Common myeloid progenitor, CD34-positive (primary cell): ENCODE measurements at regions of chr1 and their contacts with region 1.

Region 1: DNA sequence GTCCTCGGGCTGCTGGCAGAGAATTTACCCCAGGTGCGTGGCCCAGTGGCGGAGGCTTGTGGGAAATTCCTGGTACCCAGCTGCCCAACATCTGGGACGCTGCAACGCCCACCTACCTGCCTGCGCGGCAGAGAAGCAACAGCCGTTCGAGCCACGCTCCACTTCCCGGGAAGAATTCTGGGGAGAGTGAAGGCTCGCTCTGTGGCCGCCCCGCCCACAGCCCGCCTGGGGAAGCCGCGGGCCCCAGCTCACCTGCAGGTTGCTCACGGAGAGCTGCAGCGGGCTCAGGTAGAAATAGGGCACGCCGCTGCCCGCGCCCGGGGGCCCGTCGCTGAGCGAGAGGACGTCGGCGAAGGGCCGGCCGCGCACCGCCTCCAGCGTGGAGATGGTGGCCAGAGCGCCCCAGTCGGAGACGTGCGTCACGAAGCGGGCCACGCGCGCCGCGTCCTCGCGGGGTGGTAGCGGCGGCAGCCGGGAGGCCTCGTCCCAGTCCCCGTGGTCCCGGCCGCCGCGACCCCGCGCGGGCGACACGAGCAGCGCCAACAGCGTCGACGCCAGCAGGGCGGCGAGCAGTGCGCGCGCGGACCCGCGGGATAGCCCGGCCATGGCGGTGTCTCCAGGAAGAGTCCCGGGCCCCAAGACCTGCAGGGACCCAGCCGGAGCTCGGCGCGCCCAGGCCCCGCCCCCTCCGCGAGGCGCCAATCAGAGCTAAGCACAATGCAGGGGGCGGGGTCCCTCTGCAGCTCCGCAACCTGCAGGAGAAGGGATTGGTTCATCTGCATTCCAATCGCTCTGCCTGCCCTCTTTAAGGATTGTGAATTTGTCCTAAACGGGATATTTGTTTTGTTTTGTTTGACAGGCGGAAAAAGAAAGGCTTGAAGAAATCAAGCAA is at the start of gene CREG1:
- DNase-seq: peak; percentile 93 to 96 (median 96)
- H3K4me3 ChIP-seq: peak within 1 kb of the TSS; percentile 76 to 90 (median 84)
- H3K27ac ChIP-seq: peak within 1 kb of the TSS; percentile 40 to 96
- H3K4me1 ChIP-seq: peaks cover 41 to 63% (median 55%) of the 10 kb centered on the region in 4 experiments
- H3K27me3 ChIP-seq: no peaks in the 10 kb centered on the region

Region 2: GRCh38 chr1:167420510-167420909 is 132.9 kb before region 1 on chr1:
- CTCF ChIA-PET with region 1: no interaction called
- POLR2A ChIA-PET with region 1: no interaction called
- DNase-seq: peak in 2 of 3 donors; percentile 19 to 29
- H3K4me3 ChIP-seq: no peak overlapping the region
- H3K27ac ChIP-seq: no peak overlapping the region
- H3K4me1 ChIP-seq: peaks cover 0 to 4% (median 1%) of the 10 kb centered on the region in 4 experiments
- H3K27me3 ChIP-seq: no peaks in the 10 kb centered on the region

Region 3: DNA sequence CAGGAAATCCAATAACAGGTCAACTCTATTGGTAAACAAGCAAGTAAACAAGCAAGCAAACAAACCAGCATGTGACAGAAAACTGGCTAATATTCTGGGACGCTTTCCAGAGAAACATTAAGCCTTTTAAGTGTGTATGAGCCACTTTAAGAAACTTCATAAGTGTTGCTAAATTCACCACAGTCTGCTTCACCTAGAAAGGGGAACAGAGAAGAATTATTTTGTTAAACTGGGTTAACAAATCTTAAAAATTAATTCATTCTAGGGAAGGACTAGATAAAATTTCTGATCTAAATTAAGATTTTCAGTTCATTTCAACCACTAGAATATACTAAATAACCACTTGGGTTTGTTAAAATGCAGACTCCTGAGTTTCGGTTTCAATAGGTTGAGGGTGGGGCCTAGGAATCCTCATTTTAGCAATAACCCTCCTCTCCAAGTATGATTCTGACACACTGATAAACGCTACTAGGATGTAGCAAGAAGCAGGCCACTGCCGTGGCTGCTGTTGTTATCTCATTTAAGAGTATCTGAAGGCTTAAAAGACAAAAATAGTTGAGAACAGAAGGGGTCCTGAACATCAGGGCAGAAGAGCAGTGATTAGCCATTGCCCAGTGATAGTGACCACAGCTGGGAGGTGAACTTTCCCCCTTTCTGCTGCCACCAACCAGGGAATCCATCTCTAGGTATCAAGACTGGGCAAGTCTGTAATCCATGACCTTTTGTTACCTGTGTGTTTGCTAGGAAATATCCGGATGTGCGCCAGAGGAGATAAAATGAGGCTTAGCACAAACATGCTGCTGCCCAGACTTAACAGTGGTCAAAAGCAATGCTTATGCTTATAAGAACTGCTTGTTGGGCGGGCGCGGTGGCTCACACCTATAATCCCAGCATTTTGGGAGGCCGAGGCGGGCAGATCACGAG is 11.0 kb before region 1 on chr1:
- CTCF ChIA-PET with region 1: interaction called, 20 read pairs
- POLR2A ChIA-PET with region 1: interaction called, 3 read pairs
- DNase-seq: no peak
- H3K4me3 ChIP-seq: no peak overlapping the region
- H3K27ac ChIP-seq: no peak overlapping the region
- H3K4me1 ChIP-seq: peaks cover 0 to 18% (median 8%) of the 10 kb centered on the region in 4 experiments
- H3K27me3 ChIP-seq: no peaks in the 10 kb centered on the region

Region 4: GRCh38 chr1:167563579-167564246 is 10.3 kb after region 1 on chr1:
- CTCF ChIA-PET with region 1: interaction called, 13 read pairs
- POLR2A ChIA-PET with region 1: no interaction called
- DNase-seq: no peak
- H3K4me3 ChIP-seq: no peak overlapping the region
- H3K27ac ChIP-seq: no peak overlapping the region
- H3K4me1 ChIP-seq: peaks cover 0 to 16% (median 3%) of the 10 kb centered on the region in 4 experiments
- H3K27me3 ChIP-seq: no peaks in the 10 kb centered on the region

Region 5: DNA sequence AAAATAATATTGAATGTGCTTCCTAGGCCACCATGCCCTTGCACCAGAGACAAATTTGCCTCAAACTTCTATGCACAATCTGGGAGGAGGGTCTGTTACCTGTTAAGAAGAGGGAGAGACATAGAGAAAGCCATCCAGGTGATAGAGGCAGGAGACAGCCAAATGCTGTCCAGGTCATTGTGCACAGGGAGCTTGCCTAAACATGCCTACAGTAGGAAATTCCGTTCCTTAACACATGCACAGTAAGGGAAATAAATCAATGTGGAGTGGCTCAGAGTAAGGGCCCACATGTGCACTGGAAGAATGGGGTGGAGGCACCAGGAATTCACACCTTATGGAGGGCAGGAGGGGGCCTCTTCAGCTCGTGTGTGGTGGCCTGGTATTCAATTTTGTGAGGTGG is 19.6 kb after region 1 on chr1:
- CTCF ChIA-PET with region 1: interaction called, 13 read pairs
- POLR2A ChIA-PET with region 1: no interaction called
- DNase-seq: no peak
- H3K4me3 ChIP-seq: no peak overlapping the region
- H3K27ac ChIP-seq: no peak overlapping the region
- H3K4me1 ChIP-seq: no peaks in the 10 kb centered on the region
- H3K27me3 ChIP-seq: no peaks in the 10 kb centered on the region